GM13977 (cell line): ENCODE measurements at regions of chr10 and their contacts with region 1.

Region 1: GRCh38 chr10:100046021-100046486 is 35.6 kb downstream of the CPN1 start:
- DNase-seq: peak; percentile 63
- CTCF ChIP-seq: peak; percentile 92

Region 2: GRCh38 chr10:99845837-99846382 is 200.1 kb before region 1 on chr10:
- in situ Hi-C with region 1: loop called (anchors 10 kb)
- DNase-seq: peak; percentile 68
- CTCF ChIP-seq: peak; percentile 92